PC-3 (cell line): ENCODE measurements at regions of chr2 and their contacts with region 1.

Region 1: GRCh38 chr2:165508927-165509326 is 39.4 kb downstream of the CSRNP3 start:
- DNase-seq: peak; percentile 74
- ATAC-seq: peak; percentile 93
- H3K4me3 ChIP-seq: no peak overlapping the region
- H3K27ac ChIP-seq: no peak overlapping the region
- H3K4me1 ChIP-seq: peaks cover 6% of the 10 kb centered on the region
- H3K27me3 ChIP-seq: no peaks in the 10 kb centered on the region
- CTCF ChIP-seq: no peak

Region 2: GRCh38 chr2:165587335-165587938 is 78.5 kb after region 1 on chr2:
- CTCF ChIA-PET with region 1: no interaction called
- POLR2A ChIA-PET with region 1: no interaction called
- intact Hi-C with region 1: loop called (anchors 2 kb)
- DNase-seq: peak; percentile 46
- ATAC-seq: peak; percentile 21
- H3K4me3 ChIP-seq: no peak overlapping the region
- H3K27ac ChIP-seq: no peak overlapping the region
- H3K4me1 ChIP-seq: peaks cover 49% of the 10 kb centered on the region
- H3K27me3 ChIP-seq: no peaks in the 10 kb centered on the region
- CTCF ChIP-seq: no peak